IMR-90 (cell line): ENCODE measurements at regions of chr3 and their contacts with region 1.

Region 1: DNA sequence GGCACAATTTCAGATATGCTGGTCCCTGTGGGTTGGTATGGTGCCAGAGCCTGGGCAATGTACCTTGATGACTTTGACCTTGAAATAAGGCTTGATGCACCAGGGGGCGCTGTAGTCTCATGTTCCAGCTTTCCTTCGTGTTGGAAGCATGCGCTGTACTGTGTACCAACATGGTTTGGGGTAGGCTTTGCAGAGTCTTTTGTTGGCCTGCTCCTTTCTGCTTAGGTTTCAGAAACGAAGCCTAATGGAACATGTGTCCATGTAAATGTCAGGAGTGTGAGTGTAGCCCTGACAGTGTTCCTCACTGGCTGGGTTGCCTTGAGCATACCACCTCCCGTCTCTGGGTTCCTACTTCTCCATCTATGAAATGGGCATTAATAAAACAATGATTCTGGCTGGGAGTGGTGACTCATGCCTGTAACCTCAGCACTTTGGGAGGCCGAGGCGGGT is 3.6 kb upstream of the CCR4 start:
- DNase-seq: peak; percentile 75
- ATAC-seq: peak; percentile 94
- H3K4me3 ChIP-seq: no peak overlapping the region
- H3K27ac ChIP-seq: no peak overlapping the region
- H3K4me1 ChIP-seq: no peaks in the 10 kb centered on the region
- H3K27me3 ChIP-seq: peaks cover 6% of the 10 kb centered on the region
- CTCF ChIP-seq: peak; percentile 78
- POLR2A ChIP-seq: no peak
- RAD21 ChIP-seq: peak; percentile 87

Region 2: DNA sequence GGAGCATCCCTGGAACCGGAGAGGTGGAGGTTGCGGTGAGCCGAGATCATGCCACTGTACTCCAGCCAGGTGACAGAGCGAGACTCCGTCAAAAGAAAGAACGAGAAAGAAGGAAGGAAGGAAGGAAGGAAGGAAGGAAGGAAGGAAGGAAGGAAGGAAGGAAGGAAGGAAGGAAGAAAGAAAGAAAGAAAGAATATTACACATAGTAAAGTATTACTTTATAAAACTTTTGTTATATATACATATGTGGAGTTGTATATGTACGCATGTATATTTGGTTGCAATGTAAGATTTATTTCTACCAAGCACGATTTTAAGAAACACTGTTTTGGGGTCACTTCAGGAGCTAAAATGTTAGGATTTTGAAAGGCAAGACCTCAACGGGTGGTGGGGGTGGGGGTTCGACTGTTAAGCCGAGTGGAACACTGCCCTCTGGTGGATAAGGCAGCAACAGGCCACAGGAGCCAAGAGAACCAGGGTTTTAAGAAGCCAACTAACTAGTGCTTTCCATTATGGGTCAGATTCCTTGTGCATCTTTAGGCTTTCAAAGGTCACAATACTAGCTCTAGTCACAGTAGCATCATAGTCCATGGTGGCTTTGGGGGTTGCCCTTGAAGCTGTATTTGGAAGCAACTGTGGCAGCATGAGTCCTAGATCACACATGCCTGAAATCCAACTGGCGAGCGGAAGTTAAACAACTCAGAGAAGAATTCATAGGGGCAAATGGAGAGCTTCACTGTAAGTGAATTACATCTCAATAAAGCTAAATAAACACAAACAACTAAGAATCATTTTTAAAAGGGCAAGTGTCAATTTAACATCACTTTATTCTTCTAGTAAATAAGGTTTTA is 126.6 kb after region 1 on chr3:
- CTCF ChIA-PET with region 1: interaction called, 9 read pairs
- POLR2A ChIA-PET with region 1: no interaction called
- dilution Hi-C with region 1: no loop called
- in situ Hi-C with region 1: loop called (anchors 5 kb)
- intact Hi-C with region 1: loop called (anchors 1 kb)
- DNase-seq: peak; percentile 72
- ATAC-seq: peak; percentile 91
- H3K4me3 ChIP-seq: no peak overlapping the region
- H3K27ac ChIP-seq: no peak overlapping the region
- H3K4me1 ChIP-seq: no peaks in the 10 kb centered on the region
- H3K27me3 ChIP-seq: no peaks in the 10 kb centered on the region
- CTCF ChIP-seq: peak; percentile 86
- POLR2A ChIP-seq: no peak
- RAD21 ChIP-seq: peak; percentile 71